H1 (cell line): ENCODE measurements at regions of chr15 and their contacts with region 1.

Region 1: DNA sequence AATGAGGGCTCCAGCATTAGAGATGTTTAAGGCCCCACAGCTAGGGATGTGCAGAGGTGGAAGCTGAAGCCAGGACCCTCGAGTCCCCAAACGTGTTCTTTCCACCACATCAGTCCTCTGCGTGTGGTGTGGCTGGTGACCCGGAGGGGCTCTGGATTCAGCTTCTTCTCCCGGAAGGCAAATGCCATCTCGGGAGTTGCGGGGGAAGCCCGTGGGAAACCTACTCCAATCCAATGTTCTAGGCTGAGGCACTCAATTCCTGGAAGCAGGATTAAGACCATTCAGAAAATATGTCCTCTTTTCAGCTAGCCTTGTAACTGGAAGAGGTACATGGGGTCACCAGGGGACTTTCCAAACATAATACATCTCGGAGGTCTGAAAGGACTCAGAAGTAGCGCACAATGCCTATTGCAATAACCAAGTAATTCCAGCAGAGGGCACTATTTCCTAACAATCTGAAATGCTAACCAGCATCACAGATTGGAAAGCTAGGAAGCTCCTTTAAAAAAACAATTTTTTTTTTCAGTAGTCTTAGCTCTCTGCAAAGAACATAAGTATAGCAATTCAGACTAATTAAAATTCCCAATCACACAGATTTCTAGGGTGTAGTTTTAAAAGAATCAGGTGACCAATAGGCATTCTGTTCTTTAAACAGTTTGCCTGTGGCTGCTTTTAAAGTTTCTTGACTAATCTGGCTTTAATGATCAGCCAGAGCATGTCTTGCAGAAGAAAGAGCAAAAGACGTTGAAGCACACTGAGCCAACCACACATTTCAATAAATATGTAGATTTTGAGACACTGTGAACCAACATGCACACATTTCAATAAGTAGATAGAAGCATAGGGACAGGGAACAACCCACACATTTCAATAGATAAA is 36.1 kb downstream of the BNC1 start:
- DNase-seq: peak; percentile 43 to 54
- H3K4me3 ChIP-seq: no peak overlapping the region
- H3K27ac ChIP-seq: no peak overlapping the region
- H3K4me1 ChIP-seq: peaks cover 0 to 10% (median 4%) of the 10 kb centered on the region in 4 experiments; a peak in 5 of 7 replicates
- H3K27me3 ChIP-seq: no peaks in the 10 kb centered on the region; a peak in 2 of 7 replicates
- CTCF ChIP-seq: peak in 2 of 3 experiments; percentile 76 to 79; a peak in 3 of 4 replicates
- EP300 ChIP-seq: no peak
- POLR2A ChIP-seq: no peak
- RAD21 ChIP-seq: peak; percentile 96

Region 2: DNA sequence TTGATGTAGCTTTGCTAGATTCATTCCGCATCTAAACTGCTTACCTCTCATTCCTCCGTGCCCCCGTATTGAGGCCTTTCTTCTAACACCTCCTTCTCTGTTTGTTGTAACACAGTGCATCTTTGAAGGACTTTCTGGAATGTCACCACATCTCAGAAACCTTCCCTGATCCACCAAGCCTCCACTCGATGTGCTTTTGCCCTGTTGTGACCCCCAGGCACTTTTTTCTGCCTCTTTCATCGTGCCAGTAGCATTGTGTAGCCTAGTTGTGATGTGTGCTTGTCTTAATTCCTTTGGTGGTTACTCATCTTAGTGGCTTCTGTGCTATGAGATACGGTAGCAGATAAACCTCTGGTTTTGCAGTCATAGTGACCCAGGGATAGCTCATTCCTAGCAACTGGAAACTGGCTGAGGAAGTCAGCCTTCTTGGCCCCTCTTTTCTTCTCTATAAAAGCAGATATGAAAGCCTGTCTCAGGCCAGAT is 37.7 kb after region 1 on chr15:
- CTCF ChIA-PET with region 1: interaction called, 10 read pairs
- POLR2A ChIA-PET with region 1: no interaction called
- DNase-seq: no peak
- H3K4me3 ChIP-seq: no peak overlapping the region
- H3K27ac ChIP-seq: no peak overlapping the region
- H3K4me1 ChIP-seq: peaks cover 0 to 8% (median 4%) of the 10 kb centered on the region in 4 experiments; a peak in 5 of 7 replicates
- H3K27me3 ChIP-seq: peaks cover 22 to 51% (median 48%) of the 10 kb centered on the region in 4 experiments
- CTCF ChIP-seq: no peak
- EP300 ChIP-seq: no peak
- POLR2A ChIP-seq: no peak
- RAD21 ChIP-seq: no peak

Region 3: GRCh38 chr15:83380682-83381081 is 132.3 kb after region 1 on chr15:
- CTCF ChIA-PET with region 1: interaction called, 26 read pairs
- POLR2A ChIA-PET with region 1: no interaction called
- DNase-seq: no peak
- H3K4me3 ChIP-seq: no peak overlapping the region
- H3K27ac ChIP-seq: no peak overlapping the region
- H3K4me1 ChIP-seq: peaks cover 3 to 12% (median 10%) of the 10 kb centered on the region in 4 experiments
- H3K27me3 ChIP-seq: peaks cover 0 to 25% (median 18%) of the 10 kb centered on the region in 4 experiments; a peak in 6 of 7 replicates
- CTCF ChIP-seq: peak in 2 of 3 experiments; percentile 19 to 25; a peak in 2 of 4 replicates
- EP300 ChIP-seq: no peak
- POLR2A ChIP-seq: no peak
- RAD21 ChIP-seq: peak; percentile 52 to 62

Region 4: DNA sequence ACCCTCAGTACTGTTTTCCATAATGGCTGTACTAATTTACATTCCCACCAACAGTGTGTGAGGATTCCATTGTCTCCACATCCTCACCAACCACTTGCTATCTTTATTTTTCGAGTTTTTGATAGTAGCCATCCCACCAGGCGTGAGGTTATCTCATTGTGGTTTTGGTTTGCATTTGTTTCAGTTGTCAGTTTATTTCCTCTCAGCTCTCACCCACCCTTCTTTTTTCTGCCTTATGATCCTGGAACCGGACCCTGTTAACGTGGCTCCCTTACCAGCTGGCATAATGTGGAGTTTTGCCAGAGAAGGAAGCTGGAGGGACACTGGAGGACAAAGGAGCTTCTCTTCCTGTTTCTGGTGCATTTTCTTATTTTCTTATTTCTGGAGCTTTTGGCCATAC is 173.7 kb after region 1 on chr15:
- CTCF ChIA-PET with region 1: interaction called, 23 read pairs
- POLR2A ChIA-PET with region 1: no interaction called
- DNase-seq: no peak
- H3K4me3 ChIP-seq: no peak overlapping the region
- H3K27ac ChIP-seq: no peak overlapping the region
- H3K4me1 ChIP-seq: no peaks in the 10 kb centered on the region
- H3K27me3 ChIP-seq: peaks cover 0 to 1% (median 0%) of the 10 kb centered on the region in 4 experiments; a peak in 1 of 7 replicates
- CTCF ChIP-seq: no peak
- EP300 ChIP-seq: no peak
- POLR2A ChIP-seq: no peak
- RAD21 ChIP-seq: no peak

Region 5: DNA sequence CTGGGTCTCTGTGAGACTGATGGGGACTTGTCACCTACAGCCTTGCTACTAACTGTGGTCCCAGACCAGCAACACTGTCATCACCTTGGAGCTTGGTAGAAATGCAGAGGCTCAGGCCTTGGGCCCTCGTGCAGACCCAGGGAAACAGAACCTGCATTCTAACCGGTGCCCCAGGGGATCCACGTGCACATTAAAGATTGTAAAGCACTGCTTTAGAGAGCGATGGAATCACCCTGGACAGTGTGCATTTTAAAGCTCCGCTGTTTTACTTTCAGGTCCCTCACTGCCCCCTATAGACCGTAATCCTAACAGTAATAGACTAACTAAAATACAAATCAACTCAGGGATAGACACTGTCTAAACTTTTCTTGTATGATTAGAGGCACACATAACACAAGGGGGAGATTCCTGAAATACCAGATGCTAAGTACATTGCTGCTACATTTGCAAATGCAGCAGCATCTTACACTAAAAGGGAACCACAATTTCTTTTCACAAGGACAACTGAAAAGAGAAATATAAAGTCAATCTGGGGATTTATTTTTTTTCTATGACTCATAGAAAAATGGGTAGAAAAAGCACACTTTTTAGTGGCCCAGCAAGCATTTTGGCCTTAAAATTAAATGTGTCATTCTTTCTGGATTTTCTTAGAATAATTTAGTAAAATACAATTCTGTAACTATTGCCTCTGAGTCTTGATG is 188.2 kb after region 1 on chr15:
- CTCF ChIA-PET with region 1: interaction called, 262 read pairs
- POLR2A ChIA-PET with region 1: interaction called, 6 read pairs
- DNase-seq: peak in 1 of 2 experiments; percentile 49
- H3K4me3 ChIP-seq: no peak overlapping the region
- H3K27ac ChIP-seq: no peak overlapping the region
- H3K4me1 ChIP-seq: peaks cover 0 to 7% (median 0%) of the 10 kb centered on the region in 4 experiments; a peak in 1 of 7 replicates
- H3K27me3 ChIP-seq: no peaks in the 10 kb centered on the region
- CTCF ChIP-seq: peak in 2 of 3 experiments; percentile 50 to 62; a peak in 2 of 4 replicates
- EP300 ChIP-seq: no peak
- POLR2A ChIP-seq: no peak
- RAD21 ChIP-seq: peak; percentile 86 to 88

Region 6: DNA sequence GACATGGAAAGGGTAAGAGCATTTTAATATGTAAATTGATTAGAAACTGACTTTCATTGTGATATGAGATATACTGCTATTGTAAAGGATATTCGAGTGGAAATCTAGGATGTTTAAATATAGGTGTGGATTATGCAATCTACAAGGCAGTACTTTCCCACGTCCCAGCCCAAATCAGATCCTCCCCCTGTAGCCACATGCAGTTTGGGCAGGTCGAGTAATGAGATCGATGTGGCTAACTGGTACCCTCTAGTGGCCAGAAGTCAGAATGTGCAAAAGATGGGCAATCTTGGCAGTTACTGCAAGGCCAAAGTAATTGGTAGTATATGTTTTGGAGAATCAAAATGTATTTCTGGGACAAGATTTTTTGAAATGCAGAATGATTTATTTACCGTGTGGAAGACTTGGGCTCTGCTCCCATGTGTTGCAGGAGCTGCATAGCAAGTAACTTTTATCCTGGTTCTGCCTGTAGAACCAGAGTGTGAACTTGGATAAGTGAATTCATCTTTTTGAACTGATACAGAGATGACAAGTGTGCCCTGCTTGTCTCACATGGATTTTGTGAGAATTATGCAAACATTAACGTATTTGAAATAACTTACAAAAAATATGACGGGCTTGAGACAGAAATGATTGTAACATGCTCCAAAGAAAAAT is 311.0 kb after region 1 on chr15:
- CTCF ChIA-PET with region 1: interaction called, 52 read pairs
- POLR2A ChIA-PET with region 1: no interaction called
- DNase-seq: peak; percentile 46 to 74
- H3K4me3 ChIP-seq: no peak overlapping the region
- H3K27ac ChIP-seq: no peak overlapping the region
- H3K4me1 ChIP-seq: no peaks in the 10 kb centered on the region
- H3K27me3 ChIP-seq: no peaks in the 10 kb centered on the region
- CTCF ChIP-seq: peak; percentile 54 to 94 (median 91)
- EP300 ChIP-seq: no peak; a peak in 1 of 3 replicates
- POLR2A ChIP-seq: no peak
- RAD21 ChIP-seq: peak; percentile 96 to 100

Region 7: GRCh38 chr15:83571820-83572707 is 323.7 kb after region 1 on chr15:
- CTCF ChIA-PET with region 1: interaction called, 27 read pairs
- POLR2A ChIA-PET with region 1: no interaction called
- DNase-seq: peak in 1 of 2 experiments; percentile 53
- H3K4me3 ChIP-seq: no peak overlapping the region
- H3K27ac ChIP-seq: no peak overlapping the region
- H3K4me1 ChIP-seq: no peaks in the 10 kb centered on the region
- H3K27me3 ChIP-seq: no peaks in the 10 kb centered on the region
- CTCF ChIP-seq: peak in 2 of 3 experiments; percentile 55 to 56; a peak in 3 of 4 replicates
- EP300 ChIP-seq: no peak
- POLR2A ChIP-seq: no peak
- RAD21 ChIP-seq: peak; percentile 56 to 70